ENCODE measurements at regions of chr10 and their contacts with region 1.

Region 1: DNA sequence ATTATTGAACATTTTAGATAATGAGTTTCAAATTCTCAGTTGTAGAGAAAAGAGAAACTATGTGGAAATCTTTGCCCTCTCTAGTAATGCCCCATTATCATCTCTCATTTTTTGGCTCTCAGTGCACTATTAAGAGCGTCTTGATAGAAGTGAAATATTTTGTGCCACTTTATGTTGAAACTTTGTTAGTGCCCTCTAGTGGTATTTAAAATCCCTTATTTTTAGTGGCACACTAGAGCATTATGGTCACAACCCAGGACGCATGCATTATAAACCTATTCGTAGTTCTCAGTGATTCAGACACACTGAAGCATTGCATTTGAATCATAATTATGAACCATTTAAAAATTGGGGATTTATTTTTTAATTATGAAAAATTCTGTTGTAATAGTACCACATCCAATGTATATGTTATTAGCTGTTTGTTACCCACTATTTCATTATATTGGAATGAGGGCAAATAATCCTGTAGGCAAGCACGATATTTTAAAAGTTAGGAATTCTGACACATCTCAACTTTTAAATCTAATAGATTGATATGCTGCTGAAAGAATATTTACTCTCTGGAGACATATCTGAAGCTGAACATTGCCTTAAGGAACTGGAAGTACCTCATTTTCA is 21.9 kb downstream of the PDCD4 start:
- DNase-seq: peak; percentile 45
- ATAC-seq: peak; percentile 94
- H3K4me3 ChIP-seq: no peak overlapping the region
- H3K27ac ChIP-seq: no peak overlapping the region
- H3K4me1 ChIP-seq: no peaks in the 10 kb centered on the region
- H3K27me3 ChIP-seq: no peaks in the 10 kb centered on the region
- CTCF ChIP-seq: peak; percentile 56 to 78 (median 73)
- POLR2A ChIP-seq: no peak
- RAD21 ChIP-seq: peak; percentile 77

Region 2: DNA sequence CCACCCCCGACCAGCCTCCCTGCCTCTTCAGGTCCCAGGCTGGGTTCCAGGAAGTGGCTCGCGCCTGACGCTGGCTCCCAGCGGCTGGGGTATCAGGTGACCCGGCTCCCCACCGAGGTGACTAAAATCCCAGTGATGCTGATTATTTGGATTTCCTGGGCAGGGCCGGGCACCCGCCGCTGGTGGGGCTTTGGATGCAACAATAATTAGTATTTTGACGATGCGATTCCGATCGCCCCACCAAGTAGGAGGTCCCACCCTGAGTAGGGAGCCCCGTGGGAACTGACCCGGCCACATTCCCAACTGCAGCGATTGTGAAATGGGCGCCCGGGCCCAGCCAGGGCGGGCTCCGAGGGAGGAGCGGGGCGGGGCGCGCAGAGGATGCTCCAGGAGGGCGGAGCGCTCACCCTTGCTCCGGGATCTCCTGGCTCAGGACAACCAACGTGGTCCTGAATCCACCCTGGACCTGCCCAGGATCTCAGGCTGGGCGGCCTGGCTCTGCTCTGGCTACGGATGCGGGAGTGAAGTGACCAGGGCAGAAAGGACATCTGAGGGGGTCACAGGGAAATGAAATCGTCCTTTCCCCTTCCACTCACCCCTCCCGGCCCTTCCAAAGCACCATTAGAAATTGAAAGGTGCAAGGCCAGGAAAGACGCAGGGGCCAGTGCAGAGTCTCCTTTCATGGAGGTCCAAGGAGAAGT is 363.4 kb before region 1 on chr10:
- CTCF ChIA-PET with region 1: no interaction called
- POLR2A ChIA-PET with region 1: no interaction called
- RAD21 ChIA-PET with region 1: no interaction called
- intact Hi-C with region 1: no loop called
- DNase-seq: peak; percentile 73
- ATAC-seq: peak; percentile 85
- H3K4me3 ChIP-seq: peak overlapping the region; percentile 59
- H3K27ac ChIP-seq: peak overlapping the region; percentile 76
- H3K4me1 ChIP-seq: peaks cover 64 to 84% of the 10 kb centered on the region in 2 experiments
- H3K27me3 ChIP-seq: no peaks in the 10 kb centered on the region
- CTCF ChIP-seq: no peak
- POLR2A ChIP-seq: no peak
- RAD21 ChIP-seq: no peak

Region 3: DNA sequence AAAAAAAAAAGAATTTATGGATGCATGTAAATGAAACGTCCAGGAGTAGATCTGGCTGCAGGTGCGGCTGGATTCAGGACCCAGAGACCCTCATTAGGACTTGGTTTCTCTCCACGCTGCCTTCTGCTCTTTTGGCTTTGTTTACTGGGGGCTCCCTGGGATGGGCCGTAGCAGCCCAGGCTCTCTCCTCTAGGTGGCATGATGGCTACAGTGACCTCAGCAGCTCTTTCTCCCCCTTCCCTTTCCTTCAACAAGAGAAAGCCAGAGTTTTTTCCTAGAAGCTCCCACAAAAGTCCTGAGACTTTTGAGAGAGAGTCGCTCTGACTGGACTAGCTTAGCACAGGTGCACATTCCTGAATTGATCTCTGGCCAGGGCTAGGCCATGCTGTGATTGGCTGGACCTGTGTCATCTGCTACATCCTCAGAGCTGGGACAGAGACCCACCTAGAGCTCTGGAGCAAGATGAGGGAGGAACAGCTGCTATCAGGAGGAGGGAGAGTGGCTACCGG is 89.8 kb before region 1 on chr10:
- CTCF ChIA-PET with region 1: interaction called, 5 read pairs
- POLR2A ChIA-PET with region 1: no interaction called
- RAD21 ChIA-PET with region 1: no interaction called
- intact Hi-C with region 1: loop called (anchors 5 kb)
- DNase-seq: no peak
- ATAC-seq: peak; percentile 91
- H3K4me3 ChIP-seq: no peak overlapping the region
- H3K27ac ChIP-seq: no peak overlapping the region
- H3K4me1 ChIP-seq: peaks cover 2 to 4% of the 10 kb centered on the region in 2 experiments; a peak in 1 of 4 replicates
- H3K27me3 ChIP-seq: no peaks in the 10 kb centered on the region
- CTCF ChIP-seq: peak; percentile 55 to 74 (median 67); a peak in 5 of 6 replicates
- POLR2A ChIP-seq: no peak
- RAD21 ChIP-seq: peak; percentile 81

Region 4: GRCh38 chr10:110881247-110881646 is 12.4 kb before region 1 on chr10:
- CTCF ChIA-PET with region 1: interaction called, 17 read pairs
- POLR2A ChIA-PET with region 1: no interaction called
- RAD21 ChIA-PET with region 1: no interaction called
- intact Hi-C with region 1: no loop called
- DNase-seq: no peak
- ATAC-seq: no peak
- H3K4me3 ChIP-seq: no peak overlapping the region
- H3K27ac ChIP-seq: no peak overlapping the region
- H3K4me1 ChIP-seq: no peaks in the 10 kb centered on the region
- H3K27me3 ChIP-seq: no peaks in the 10 kb centered on the region
- CTCF ChIP-seq: no peak
- POLR2A ChIP-seq: no peak
- RAD21 ChIP-seq: no peak

Measured in HCT116 (cell line).